Mucosa of descending colon (tissue), 3 donors: ENCODE measurements at regions of chr7 and their contacts with region 1.

Region 1: DNA sequence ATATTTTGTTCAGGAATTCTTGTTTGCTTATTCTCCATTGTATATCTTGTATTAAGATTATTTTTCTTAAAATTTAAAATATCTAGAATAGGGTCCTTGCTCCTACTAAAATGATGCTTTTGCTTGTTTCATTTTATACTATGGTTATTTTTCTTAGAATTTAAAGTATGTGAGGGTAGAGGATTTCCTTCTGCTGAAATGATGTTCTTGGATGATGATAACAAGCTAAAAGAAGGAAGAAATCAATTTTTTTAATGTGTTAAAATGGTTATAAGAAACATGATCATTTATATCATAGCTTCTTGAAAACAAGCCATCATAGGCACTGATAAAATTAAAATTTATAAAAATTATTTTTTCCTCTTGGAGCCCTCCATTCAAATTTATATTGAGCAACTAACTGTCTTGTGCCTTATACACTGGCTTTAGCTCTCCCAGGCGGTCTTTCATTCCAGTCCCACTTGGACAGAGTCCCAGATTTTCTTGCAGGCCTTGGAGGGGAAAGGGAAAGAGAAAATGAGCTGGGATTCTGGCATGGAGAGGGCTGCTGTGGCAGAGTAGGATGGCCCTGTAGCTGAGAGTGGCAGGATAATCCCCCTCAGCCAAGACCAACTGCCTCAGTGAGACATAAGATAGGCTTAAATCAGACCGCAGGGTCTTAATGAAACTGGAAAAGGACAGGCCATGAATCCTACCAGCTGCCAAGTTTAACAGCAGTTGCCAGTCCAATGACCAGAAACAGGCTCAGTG is 60.2 kb downstream of the DNAJB9 start:
- DNase-seq: peak in 1 of 3 donors; percentile 8
- ATAC-seq: no peak
- H3K4me3 ChIP-seq: no peak overlapping the region
- H3K4me1 ChIP-seq: no peaks in the 10 kb centered on the region
- CTCF ChIP-seq: no peak

Region 2: GRCh38 chr7:108308903-108309302 is 320.9 kb before region 1 on chr7:
- intact Hi-C with region 1: no loop called
- DNase-seq: no peak
- ATAC-seq: no peak
- H3K4me3 ChIP-seq: no peak overlapping the region
- H3K4me1 ChIP-seq: no peaks in the 10 kb centered on the region
- CTCF ChIP-seq: no peak

Region 3: GRCh38 chr7:108973075-108973474 is 343.2 kb after region 1 on chr7:
- intact Hi-C with region 1: loop called in 1 of 2 experiments (anchors 10 kb)
- DNase-seq: no peak
- ATAC-seq: no peak
- H3K4me3 ChIP-seq: no peak overlapping the region
- H3K4me1 ChIP-seq: no peaks in the 10 kb centered on the region
- CTCF ChIP-seq: no peak